Heart left ventricle (tissue), 16 donors: ENCODE measurements at regions of chr16 and their contacts with region 1.

Region 1: DNA sequence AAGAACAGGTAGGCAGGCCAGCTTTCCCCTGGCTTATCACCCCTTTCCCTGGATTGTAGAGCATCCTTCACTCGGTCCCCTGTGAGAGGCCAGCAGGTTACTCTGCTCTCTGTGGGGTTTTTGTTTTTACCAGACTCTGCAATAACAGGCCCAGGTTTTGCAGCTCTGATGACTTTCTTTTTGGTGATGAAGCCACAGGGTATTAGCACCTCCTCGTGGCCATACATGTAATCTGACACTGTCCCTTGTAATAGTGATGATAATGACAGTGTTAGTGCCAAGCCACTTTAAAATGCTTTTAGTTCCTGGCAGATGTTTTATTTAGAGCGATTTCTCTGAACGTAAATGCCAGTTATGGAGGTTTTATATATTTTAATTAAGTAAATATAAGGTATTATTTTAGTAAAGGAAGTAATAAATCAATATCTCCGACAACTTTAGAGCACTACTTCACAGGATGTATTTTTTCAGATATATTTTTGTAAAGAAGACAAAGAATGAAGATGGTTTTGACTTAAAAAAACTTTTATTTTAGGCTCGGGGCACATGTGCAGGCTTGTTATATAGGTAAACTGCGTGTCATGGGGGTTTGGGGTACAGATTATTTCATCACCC is 38.0 kb upstream of the CPHXL start:
- DNase-seq: peak in 3 of 5 donors; percentile 40 to 50 (median 45)
- ATAC-seq: peak in 3 of 4 donors; percentile 90 to 95 (median 91)
- H3K4me3 ChIP-seq: no peak overlapping the region
- H3K27ac ChIP-seq: no peak overlapping the region
- H3K4me1 ChIP-seq: no peaks in the 10 kb centered on the region
- H3K27me3 ChIP-seq: no peaks in the 10 kb centered on the region
- CTCF ChIP-seq: peak; percentile 64 to 87 (median 78)
- POLR2A ChIP-seq: no peak

Region 2: GRCh38 chr16:75402821-75403475 is 361.3 kb before region 1 on chr16:
- intact Hi-C with region 1: loop called in 1 of 10 experiments (anchors 10 kb)
- DNase-seq: no peak
- ATAC-seq: peak in 3 of 4 donors; percentile 23 to 50 (median 50)
- H3K4me3 ChIP-seq: no peak overlapping the region
- H3K27ac ChIP-seq: peak overlapping the region; percentile 1 to 83 (median 66)
- H3K4me1 ChIP-seq: peaks cover 0 to 29% (median 20%) of the 10 kb centered on the region in 12 donors
- H3K27me3 ChIP-seq: no peaks in the 10 kb centered on the region
- CTCF ChIP-seq: peak; percentile 53 to 81 (median 66)
- POLR2A ChIP-seq: no peak

Region 3: GRCh38 chr16:75647492-75648264 is 116.6 kb before region 1 on chr16 and contains the starts of genes KARS1 and TERF2IP:
- intact Hi-C with region 1: loop called in 8 of 10 experiments (anchors 1 to 10 kb)
- DNase-seq: peak; percentile 93 to 95 (median 94)
- ATAC-seq: peak; percentile 96 to 98 (median 98)
- H3K4me3 ChIP-seq: peak within 1 kb of the TSS; percentile 85 to 99 (median 95)
- H3K27ac ChIP-seq: peak within 1 kb of the TSS; percentile 93 to 99 (median 97)
- H3K4me1 ChIP-seq: peaks cover 21 to 65% (median 48%) of the 10 kb centered on the region in 12 donors
- H3K27me3 ChIP-seq: no peaks in the 10 kb centered on the region
- CTCF ChIP-seq: no peak
- POLR2A ChIP-seq: peak; percentile 79 to 97
- total RNA-seq, gene KARS1: 111 to 152 (median 129) TPM
- total RNA-seq, gene TERF2IP: 57.0 to 76.7 (median 73.1) TPM

Region 4: GRCh38 chr16:75653922-75654321 is 110.3 kb before region 1 on chr16:
- intact Hi-C with region 1: loop called in 7 of 10 experiments (anchors 5 to 10 kb)
- DNase-seq: no peak
- ATAC-seq: no peak
- H3K4me3 ChIP-seq: no peak overlapping the region
- H3K27ac ChIP-seq: no peak overlapping the region
- H3K4me1 ChIP-seq: peaks cover 8 to 52% (median 48%) of the 10 kb centered on the region in 12 donors
- H3K27me3 ChIP-seq: no peaks in the 10 kb centered on the region
- CTCF ChIP-seq: no peak
- POLR2A ChIP-seq: no peak

Region 5: DNA sequence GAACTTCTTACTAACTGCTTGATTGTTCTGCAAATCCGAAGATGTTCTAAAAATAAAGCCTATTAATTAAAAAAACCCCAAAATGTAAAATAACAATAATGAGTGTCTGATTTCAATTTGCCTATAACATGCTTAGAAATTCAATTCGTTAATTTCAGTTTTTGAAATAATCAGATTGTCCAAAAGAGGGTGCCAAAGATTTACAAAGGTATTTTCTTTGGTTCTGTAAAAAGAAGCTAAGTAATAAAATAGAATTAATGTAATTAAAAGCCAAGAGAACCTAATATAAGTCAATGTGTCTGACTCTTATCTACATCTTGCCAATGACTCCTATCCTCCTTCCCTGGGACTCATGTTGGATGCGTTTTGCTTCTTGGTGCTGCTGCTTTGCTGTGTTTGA is 37.0 kb after region 1 on chr16:
- intact Hi-C with region 1: no loop called
- DNase-seq: no peak
- ATAC-seq: no peak
- H3K4me3 ChIP-seq: no peak overlapping the region
- H3K27ac ChIP-seq: no peak overlapping the region
- H3K4me1 ChIP-seq: no peaks in the 10 kb centered on the region
- H3K27me3 ChIP-seq: peaks cover 0 to 8% (median 0%) of the 10 kb centered on the region in 9 donors
- CTCF ChIP-seq: no peak
- POLR2A ChIP-seq: no peak